ENCODE measurements at regions of chr1 and their contacts with region 1.

Region 1: GRCh38 chr1:51296383-51297357 is 33.7 kb downstream of the TTC39A start:
- DNase-seq: peak; percentile 92

Region 2: GRCh38 chr1:51192213-51192843 is 104.3 kb before region 1 on chr1:
- intact Hi-C with region 1: loop called (anchors 2 kb)
- DNase-seq: no peak

Region 3: GRCh38 chr1:51214615-51215131 is 82.0 kb before region 1 on chr1:
- intact Hi-C with region 1: no loop called
- DNase-seq: no peak

Region 4: DNA sequence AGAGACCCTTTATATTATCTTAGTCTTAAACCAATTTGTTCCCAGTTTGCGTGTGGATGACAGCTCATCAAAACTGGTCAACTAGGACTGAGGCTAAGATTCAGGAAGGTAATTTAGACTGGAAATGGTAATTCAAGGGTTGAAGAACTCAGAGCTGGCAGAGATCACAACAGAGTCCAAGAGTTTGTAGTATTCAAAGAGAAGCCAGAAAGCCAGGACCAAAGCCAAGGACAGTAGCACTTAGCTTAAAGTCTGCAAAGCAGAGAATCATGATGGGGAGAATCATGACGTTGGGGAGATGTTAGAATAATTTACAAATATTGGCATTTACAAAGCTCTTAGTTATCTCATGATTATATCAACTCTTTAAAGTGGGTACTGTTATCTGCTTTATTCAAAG is 28.0 kb before region 1 on chr1:
- intact Hi-C with region 1: no loop called
- DNase-seq: no peak

Region 5: GRCh38 chr1:51535006-51535592 is 238.4 kb after region 1 on chr1:
- intact Hi-C with region 1: loop called (anchors 10 kb)
- DNase-seq: no peak

Measured in cardiac septum (tissue), 1 donor.